Naive thymus-derived CD4-positive, alpha-beta T cell (primary cell): ENCODE measurements at regions of chr6 and their contacts with region 1.

Region 1: DNA sequence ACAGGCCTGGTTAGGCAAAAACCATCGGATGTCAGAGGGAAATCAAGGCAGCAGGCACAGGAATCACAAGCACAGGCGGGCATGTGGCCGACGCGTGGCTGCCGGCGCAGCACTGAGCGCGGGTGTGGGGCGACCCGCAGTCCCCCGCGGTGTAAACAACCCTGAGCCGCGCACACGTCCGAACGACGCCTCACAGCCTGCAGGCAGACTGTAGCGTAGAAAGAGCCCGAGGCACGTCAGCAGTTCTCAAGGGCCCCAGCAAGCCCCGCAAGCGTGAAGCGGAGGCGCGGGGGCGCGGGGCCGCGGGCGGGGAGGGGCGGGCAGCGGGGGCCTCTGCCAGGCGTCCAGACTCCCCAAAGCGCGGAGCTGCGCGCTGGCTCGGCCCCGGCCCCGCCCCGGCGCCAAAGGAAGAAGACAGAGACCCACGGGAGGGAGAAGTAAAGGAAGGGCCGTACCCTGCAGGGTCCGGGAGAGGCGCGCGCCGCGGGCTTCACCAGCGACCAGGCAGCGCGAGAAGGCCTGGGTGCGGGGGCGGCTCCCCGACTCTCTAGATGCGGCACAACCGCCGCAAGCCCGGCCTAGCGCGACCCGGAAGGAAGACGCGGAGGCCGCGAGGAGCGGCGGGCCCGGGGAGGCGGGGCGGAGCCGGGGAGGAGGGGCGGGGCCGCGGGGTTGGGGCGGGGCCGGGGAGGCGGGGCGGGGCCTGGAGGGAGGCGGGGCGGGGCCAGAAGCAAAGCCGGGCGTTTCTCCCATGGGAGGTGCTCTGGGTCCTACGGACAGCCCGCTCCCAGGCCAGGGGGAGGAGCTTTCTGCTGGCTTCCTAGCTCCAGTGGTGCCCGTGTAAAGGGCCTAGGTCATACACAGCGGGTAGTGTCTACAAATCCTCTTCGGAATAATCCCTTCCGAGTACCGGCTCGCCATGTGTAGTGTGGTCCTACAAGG is at the start of gene FBXL4:
- DNase-seq: peak; percentile 68 to 87 (median 79)
- ATAC-seq: peak; percentile 93
- H3K4me3 ChIP-seq: peak within 1 kb of the TSS; percentile 88
- H3K4me3 Mint-ChIP-seq: peak within 1 kb of the TSS; percentile 85 to 99 (median 96)
- H3K27ac ChIP-seq: peak within 1 kb of the TSS; percentile 70
- H3K27ac Mint-ChIP-seq: peak within 1 kb of the TSS; percentile 90 to 97 (median 94)
- H3K4me1 ChIP-seq: peaks cover 12 to 18% of the 10 kb centered on the region in 2 donors
- H3K4me1 Mint-ChIP-seq: peaks cover 23 to 46% (median 40%) of the 10 kb centered on the region in 7 donors
- H3K27me3 ChIP-seq: no peaks in the 10 kb centered on the region
- H3K27me3 Mint-ChIP-seq: peaks cover 0 to 29% (median 0%) of the 10 kb centered on the region in 5 donors
- total RNA-seq, gene FBXL4: 12.0 to 24.3 (median 13.5) TPM

Region 2: GRCh38 chr6:98834060-98835031 is 113.3 kb before region 1 on chr6 and contains the start of gene POU3F2:
- CTCF ChIA-PET with region 1: no interaction called
- POLR2A ChIA-PET with region 1: no interaction called
- intact Hi-C with region 1: loop called (anchors 1 to 5 kb)
- DNase-seq: peak in 6 of 9 donors; percentile 40 to 58 (median 52)
- ATAC-seq: peak; percentile 82
- H3K4me3 ChIP-seq: peak within 1 kb of the TSS; percentile 66
- H3K4me3 Mint-ChIP-seq: peak within 1 kb of the TSS; percentile 87 to 98 (median 92)
- H3K27ac ChIP-seq: no peak within 1 kb of the TSS
- H3K27ac Mint-ChIP-seq: peak within 1 kb of the TSS in 4 of 9 donors; percentile 21 to 86 (median 78)
- H3K4me1 ChIP-seq: peaks cover 17 to 26% of the 10 kb centered on the region in 2 donors
- H3K4me1 Mint-ChIP-seq: peaks cover 31 to 57% (median 41%) of the 10 kb centered on the region in 7 donors
- H3K27me3 ChIP-seq: peaks cover 39 to 63% of the 10 kb centered on the region in 2 donors
- H3K27me3 Mint-ChIP-seq: peaks cover 73 to 87% (median 85%) of the 10 kb centered on the region in 5 donors
- total RNA-seq, gene POU3F2: not detected

Region 3: DNA sequence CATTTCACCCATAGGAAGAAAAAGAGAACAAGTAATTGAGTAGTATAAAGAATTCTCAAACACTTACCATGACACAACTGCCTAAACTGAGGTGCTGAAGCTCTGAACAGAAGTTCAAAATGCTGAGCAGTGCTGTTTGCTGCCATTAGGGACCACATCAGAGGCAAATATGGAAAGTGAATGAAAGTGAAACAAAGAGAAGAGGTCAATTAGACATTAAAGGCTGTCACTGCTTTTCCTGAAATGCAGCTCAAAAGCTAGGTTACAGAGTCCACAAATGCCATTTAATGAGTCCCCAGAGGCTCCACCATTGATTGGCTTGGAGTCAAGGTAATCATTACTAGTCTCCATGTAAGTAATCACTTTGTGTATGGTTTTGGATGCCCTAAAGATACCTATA is 67.1 kb before region 1 on chr6:
- CTCF ChIA-PET with region 1: no interaction called
- POLR2A ChIA-PET with region 1: no interaction called
- intact Hi-C with region 1: loop called in 1 of 2 experiments (anchors 5 kb)
- DNase-seq: no peak
- ATAC-seq: no peak
- H3K4me3 ChIP-seq: no peak overlapping the region
- H3K4me3 Mint-ChIP-seq: no peak overlapping the region
- H3K27ac ChIP-seq: no peak overlapping the region
- H3K27ac Mint-ChIP-seq: no peak overlapping the region
- H3K4me1 ChIP-seq: no peaks in the 10 kb centered on the region
- H3K4me1 Mint-ChIP-seq: peaks cover 0 to 9% (median 0%) of the 10 kb centered on the region in 7 donors
- H3K27me3 ChIP-seq: no peaks in the 10 kb centered on the region
- H3K27me3 Mint-ChIP-seq: no peaks in the 10 kb centered on the region

Region 4: DNA sequence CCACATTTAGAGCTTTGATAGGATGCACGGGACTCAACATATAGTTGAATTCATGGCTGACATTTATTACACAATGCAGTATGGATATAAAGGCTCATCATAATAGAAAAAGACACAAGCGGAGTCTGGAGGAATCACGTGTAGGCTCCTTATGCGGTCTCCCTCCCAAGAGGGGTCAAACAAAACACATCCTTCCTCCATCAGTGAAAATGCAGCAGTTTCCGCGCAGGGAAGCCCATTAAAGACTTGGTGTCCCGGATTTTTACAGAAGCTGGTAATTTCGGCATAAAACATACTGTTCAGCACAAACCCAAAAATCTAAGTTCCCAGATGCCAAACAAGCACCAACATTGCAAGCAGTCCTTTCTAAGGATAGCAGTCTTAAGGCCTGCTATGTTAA is 566.5 kb after region 1 on chr6:
- CTCF ChIA-PET with region 1: no interaction called
- POLR2A ChIA-PET with region 1: no interaction called
- intact Hi-C with region 1: loop called in 1 of 2 experiments (anchors 10 kb)
- DNase-seq: no peak
- ATAC-seq: no peak
- H3K4me3 ChIP-seq: peak overlapping the region; percentile 75
- H3K4me3 Mint-ChIP-seq: peak overlapping the region; percentile 26 to 99 (median 93)
- H3K27ac ChIP-seq: no peak overlapping the region
- H3K27ac Mint-ChIP-seq: peak overlapping the region in 5 of 9 donors; percentile 33 to 86 (median 65)
- H3K4me1 ChIP-seq: peaks cover 0 to 16% of the 10 kb centered on the region in 2 donors
- H3K4me1 Mint-ChIP-seq: peaks cover 4 to 32% (median 28%) of the 10 kb centered on the region in 7 donors
- H3K27me3 ChIP-seq: no peaks in the 10 kb centered on the region
- H3K27me3 Mint-ChIP-seq: peaks cover 0 to 12% (median 0%) of the 10 kb centered on the region in 5 donors

Region 5: GRCh38 chr6:99568103-99568933 is 620.7 kb after region 1 on chr6 and contains the start of gene CCNC:
- CTCF ChIA-PET with region 1: no interaction called
- POLR2A ChIA-PET with region 1: no interaction called
- intact Hi-C with region 1: loop called (anchors 1 to 10 kb)
- DNase-seq: peak; percentile 74 to 91 (median 87)
- ATAC-seq: peak; percentile 99
- H3K4me3 ChIP-seq: peak within 1 kb of the TSS; percentile 87
- H3K4me3 Mint-ChIP-seq: peak within 1 kb of the TSS; percentile 92 to 100 (median 98)
- H3K27ac ChIP-seq: peak within 1 kb of the TSS; percentile 84
- H3K27ac Mint-ChIP-seq: peak within 1 kb of the TSS; percentile 89 to 99 (median 94)
- H3K4me1 ChIP-seq: peaks cover 7 to 9% of the 10 kb centered on the region in 2 donors
- H3K4me1 Mint-ChIP-seq: peaks cover 20 to 55% (median 38%) of the 10 kb centered on the region in 7 donors
- H3K27me3 ChIP-seq: no peaks in the 10 kb centered on the region
- H3K27me3 Mint-ChIP-seq: peaks cover 0 to under 1% (median 0%) of the 10 kb centered on the region in 5 donors
- total RNA-seq, gene CCNC: 31.4 to 45.4 (median 37.3) TPM